Activated naive CD4-positive, alpha-beta T cell treated with anti-CD3 and anti-CD28 coated beads for 36 hours (primary cell): ENCODE measurements at regions of chr12 and their contacts with region 1.

Region 1: GRCh38 chr12:53220801-53221202 is 11.2 kb downstream of the RARG start:
- DNase-seq: peak; percentile 80
- H3K4me3 Mint-ChIP-seq: peak overlapping the region; percentile 90
- H3K27ac Mint-ChIP-seq: peak overlapping the region; percentile 92
- H3K4me1 Mint-ChIP-seq: peaks cover 72% of the 10 kb centered on the region
- H3K27me3 Mint-ChIP-seq: no peaks in the 10 kb centered on the region

Region 2: GRCh38 chr12:53231826-53232645 is 11.2 kb after region 1 on chr12 and contains the start of gene RARG:
- CTCF ChIA-PET with region 1: interaction called, 3 read pairs
- intact Hi-C with region 1: loop called (anchors 1 kb)
- DNase-seq: peak; percentile 70
- H3K4me3 Mint-ChIP-seq: peak within 1 kb of the TSS; percentile 82
- H3K27ac Mint-ChIP-seq: peak within 1 kb of the TSS; percentile 27
- H3K4me1 Mint-ChIP-seq: peaks cover 59% of the 10 kb centered on the region
- H3K27me3 Mint-ChIP-seq: no peaks in the 10 kb centered on the region
- total RNA-seq, gene RARG: 4.0 to 4.6 TPM

Region 3: DNA sequence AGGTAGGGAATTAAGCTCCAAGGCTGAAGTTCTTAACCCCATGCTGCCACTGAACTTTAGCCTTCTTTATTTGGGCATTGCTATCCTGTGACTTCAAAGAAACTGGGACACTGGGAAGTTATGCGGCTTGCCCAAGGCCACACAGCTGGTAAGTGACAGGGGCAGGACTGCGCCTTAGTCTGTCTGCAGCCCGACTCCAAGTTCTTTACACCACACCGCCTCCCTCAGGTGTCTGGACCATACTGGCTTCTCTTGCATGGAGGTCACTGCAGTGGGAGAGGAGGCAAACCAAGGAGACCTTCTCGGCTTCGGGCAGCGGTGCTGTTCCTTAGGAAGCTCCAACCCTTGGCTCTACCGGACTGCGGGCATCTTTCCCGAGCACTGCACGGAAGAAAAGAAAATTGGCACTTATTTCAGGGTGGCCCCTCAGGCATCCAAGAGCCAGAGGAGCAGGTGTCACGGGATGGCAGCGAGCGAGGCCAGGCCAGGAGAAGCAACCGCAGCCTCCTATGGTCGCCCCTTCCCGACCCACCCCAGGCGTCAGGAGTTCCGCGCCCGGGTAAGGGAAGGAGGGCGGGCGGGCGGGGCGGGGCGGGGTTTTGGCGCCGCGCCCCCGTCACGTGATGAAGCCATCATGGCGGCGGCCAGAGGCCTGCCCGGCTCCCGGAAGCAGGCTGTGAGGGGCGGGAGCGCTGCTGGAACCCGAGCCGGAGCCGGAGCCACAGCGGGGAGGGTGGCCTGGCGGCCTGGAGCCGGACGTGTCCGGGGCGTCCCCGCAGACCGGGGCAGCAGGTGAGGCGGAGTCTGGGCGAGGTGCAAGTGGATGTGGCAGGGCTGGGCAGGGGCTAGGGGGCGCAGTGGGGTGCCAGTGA is 30.9 kb after region 1 on chr12:
- CTCF ChIA-PET with region 1: interaction called, 178 read pairs
- intact Hi-C with region 1: loop called (anchors 1 kb)
- DNase-seq: peak; percentile 85
- H3K4me3 Mint-ChIP-seq: peak overlapping the region; percentile 97
- H3K27ac Mint-ChIP-seq: peak overlapping the region; percentile 87
- H3K4me1 Mint-ChIP-seq: peaks cover 40% of the 10 kb centered on the region
- H3K27me3 Mint-ChIP-seq: no peaks in the 10 kb centered on the region

Region 4: DNA sequence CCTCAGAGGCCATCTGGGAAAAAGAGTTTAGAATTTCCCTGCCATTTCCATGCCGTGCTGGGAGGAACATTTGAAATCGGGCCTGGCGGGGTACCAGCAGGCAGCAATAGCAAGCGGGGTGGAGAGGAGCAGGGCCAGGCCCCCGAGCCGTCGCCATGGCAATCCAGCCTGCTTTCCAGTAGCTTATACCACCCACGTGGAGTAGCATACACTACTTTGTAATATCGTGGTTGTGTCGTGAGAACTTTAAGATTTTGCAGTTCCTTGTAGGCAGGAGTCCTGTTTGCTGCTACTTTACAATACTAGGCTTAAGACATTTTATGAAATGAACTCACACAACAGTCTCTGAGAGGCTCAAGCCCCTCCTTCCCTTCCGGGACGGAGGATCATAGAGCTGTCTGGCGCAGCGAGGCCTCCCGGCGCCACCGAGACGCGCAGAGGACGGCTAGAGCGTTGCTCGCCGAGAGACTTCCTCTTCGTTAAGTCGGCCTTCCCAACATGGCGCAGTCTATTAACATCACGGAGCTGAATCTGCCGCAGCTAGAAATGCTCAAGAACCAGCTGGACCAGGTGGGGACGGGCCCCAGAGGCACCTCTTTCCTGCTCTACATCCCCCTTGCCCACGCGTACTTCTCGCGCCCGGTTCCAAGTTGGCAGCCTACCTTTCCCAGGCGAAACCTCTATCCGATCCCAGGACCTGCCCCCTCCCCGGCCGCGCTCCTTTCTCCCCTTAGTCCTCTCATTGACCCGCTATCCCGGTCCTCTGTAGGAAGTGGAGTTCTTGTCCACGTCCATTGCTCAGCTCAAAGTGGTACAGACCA is 74.5 kb after region 1 on chr12 and contains the start of gene PFDN5:
- CTCF ChIA-PET with region 1: interaction called, 154 read pairs
- intact Hi-C with region 1: loop called (anchors 1 kb)
- DNase-seq: peak; percentile 94
- H3K4me3 Mint-ChIP-seq: peak within 1 kb of the TSS; percentile 98
- H3K27ac Mint-ChIP-seq: peak within 1 kb of the TSS; percentile 95
- H3K4me1 Mint-ChIP-seq: peaks cover 53% of the 10 kb centered on the region
- H3K27me3 Mint-ChIP-seq: no peaks in the 10 kb centered on the region
- total RNA-seq, gene PFDN5: 376 to 383 TPM

Region 5: DNA sequence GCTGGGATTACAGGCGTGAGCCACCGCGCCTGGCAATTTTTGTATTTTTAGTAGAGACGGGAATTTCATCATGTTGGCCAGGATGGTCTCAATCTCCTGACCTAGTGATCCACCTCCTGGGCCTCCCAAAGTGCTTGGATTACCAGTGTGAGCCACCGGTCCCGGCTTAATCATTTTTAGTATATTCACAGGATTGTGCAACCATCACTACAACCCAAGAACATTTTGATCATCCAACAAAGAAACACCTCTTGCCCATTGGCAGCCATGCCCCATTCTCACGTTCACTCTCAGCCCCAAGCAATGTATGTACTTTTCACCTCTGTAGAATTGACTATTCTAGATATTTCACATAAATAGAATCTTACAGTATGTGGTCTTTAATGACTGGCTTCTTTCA is 179.1 kb after region 1 on chr12:
- CTCF ChIA-PET with region 1: no interaction called
- intact Hi-C with region 1: no loop called
- DNase-seq: no peak
- H3K4me3 Mint-ChIP-seq: no peak overlapping the region
- H3K27ac Mint-ChIP-seq: no peak overlapping the region
- H3K4me1 Mint-ChIP-seq: peaks cover 12% of the 10 kb centered on the region
- H3K27me3 Mint-ChIP-seq: no peaks in the 10 kb centered on the region

Region 6: GRCh38 chr12:53427905-53428594 is 207.2 kb after region 1 on chr12:
- CTCF ChIA-PET with region 1: no interaction called
- intact Hi-C with region 1: loop called (anchors 5 kb)
- DNase-seq: peak; percentile 63
- H3K4me3 Mint-ChIP-seq: no peak overlapping the region
- H3K27ac Mint-ChIP-seq: no peak overlapping the region
- H3K4me1 Mint-ChIP-seq: peaks cover 11% of the 10 kb centered on the region
- H3K27me3 Mint-ChIP-seq: no peaks in the 10 kb centered on the region

Region 7: DNA sequence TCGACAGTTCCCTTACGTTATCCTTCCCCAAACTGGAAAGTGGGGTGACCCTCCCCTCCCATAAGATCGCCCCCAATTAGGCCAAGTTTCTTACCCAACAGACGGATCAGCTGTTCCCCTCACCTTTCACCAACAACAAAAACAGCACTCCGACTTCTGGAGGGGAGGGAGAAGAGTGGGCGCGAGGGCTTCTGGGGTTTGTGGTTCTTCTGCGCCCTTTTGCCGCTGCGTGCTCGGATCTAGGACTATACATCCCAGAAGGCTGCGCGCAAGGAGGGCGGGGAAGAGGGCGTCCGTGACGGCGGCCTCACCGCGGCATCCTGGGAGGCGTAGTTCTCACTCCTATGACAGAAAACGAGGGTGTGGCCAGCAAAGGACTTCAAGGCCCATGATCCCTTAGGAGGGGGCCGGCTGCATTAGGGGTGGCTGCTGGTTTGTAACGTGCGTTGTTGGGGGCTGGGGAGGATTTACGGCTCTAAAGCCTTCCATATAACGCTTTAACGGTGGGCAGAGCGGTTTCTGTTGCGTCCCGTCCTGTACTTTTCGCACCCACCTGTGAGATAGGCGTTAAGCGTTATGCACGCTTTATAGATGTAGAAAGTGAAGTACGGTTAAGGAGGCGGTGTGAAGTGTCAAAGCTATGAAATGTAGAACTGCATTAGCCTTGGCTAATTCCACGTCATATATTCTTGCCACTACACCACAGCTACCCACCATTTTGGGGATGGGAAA is 506.7 kb after region 1 on chr12 and contains the start of gene CALCOCO1:
- CTCF ChIA-PET with region 1: no interaction called
- intact Hi-C with region 1: loop called (anchors 5 kb)
- DNase-seq: peak; percentile 99
- H3K4me3 Mint-ChIP-seq: peak within 1 kb of the TSS; percentile 92
- H3K27ac Mint-ChIP-seq: peak within 1 kb of the TSS; percentile 87
- H3K4me1 Mint-ChIP-seq: peaks cover 16% of the 10 kb centered on the region
- H3K27me3 Mint-ChIP-seq: no peaks in the 10 kb centered on the region
- total RNA-seq, gene CALCOCO1: 8.1 to 8.3 TPM